Activated T-helper 1 cell treated with anti-CD3 and anti-CD28 coated beads, Interleukin-12 subunit alpha, Interleukin-12 subunit beta, Interleukin-2, Interleukin-4 antibody, amounts not matched to agents 30 ng/mL and 10 ng/mL and 1 ng/mL, durations not matched to agents 14 hours and 24 hours and 36 hours (primary cell): ENCODE measurements at regions of chr1 and their contacts with region 1.

Region 1: DNA sequence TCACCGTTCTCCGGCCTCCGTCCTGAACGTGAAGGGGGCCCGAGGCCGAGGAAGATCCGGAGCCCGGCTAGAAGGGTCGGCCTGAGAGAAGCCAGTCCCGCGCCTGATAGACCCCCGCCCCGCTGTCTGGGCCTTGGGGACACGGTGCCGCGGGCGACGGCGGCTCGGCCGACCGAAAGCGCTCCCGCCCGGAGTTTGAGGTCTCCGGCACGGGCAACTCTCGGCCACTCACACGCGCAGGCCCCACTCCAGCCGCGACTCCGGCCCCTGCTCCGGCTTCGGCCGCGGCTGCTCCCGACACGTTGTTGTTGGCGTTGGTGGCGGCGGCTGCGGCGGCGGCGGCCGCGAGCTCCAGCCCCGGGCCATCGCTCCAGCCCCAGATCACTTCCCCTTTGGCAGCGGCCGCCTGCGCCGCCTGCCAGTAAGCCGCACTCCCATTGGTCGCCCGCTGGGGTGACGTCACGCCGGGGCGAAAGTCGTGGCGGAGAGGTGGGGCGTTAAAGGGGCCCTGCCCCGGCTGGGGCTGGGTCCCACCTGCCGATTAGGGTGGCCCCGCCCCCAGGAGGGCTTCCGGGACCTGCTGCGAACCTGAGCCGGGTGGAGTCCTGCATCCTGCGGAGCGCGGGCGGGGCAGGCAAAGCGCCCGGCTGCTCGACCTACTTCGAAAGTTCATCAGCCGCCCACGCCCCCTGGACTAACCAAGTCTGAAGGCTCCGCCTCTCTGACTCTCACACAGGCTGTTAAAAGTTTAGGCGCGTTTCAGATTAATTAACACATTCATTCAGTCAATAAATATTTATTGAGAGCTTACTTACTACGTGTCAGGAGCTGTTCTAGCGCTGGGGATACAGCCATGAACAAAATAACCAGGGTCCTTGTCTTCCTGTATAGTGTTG is at the start of gene EFCAB14:
- DNase-seq: peak; percentile 99
- H3K4me3 Mint-ChIP-seq: peak within 1 kb of the TSS; percentile 97
- H3K27ac Mint-ChIP-seq: peak within 1 kb of the TSS; percentile 94
- H3K4me1 Mint-ChIP-seq: peaks cover 41% of the 10 kb centered on the region
- H3K27me3 Mint-ChIP-seq: no peaks in the 10 kb centered on the region
- total RNA-seq, gene EFCAB14: 67.0 and 70.4 TPM in 2 replicates

Region 2: GRCh38 chr1:46303038-46303871 is 415.7 kb before region 1 on chr1 and contains the starts of genes LRRC41 and UQCRH:
- intact Hi-C with region 1: loop called (anchors 2 kb)
- DNase-seq: peak; percentile 92
- H3K4me3 Mint-ChIP-seq: peak within 1 kb of the TSS; percentile 100
- H3K27ac Mint-ChIP-seq: peak within 1 kb of the TSS; percentile 99
- H3K4me1 Mint-ChIP-seq: peaks cover 35% of the 10 kb centered on the region
- H3K27me3 Mint-ChIP-seq: no peaks in the 10 kb centered on the region
- total RNA-seq, gene LRRC41: 62.1 and 62.6 TPM in 2 replicates
- total RNA-seq, gene UQCRH: 258 and 268 TPM in 2 replicates

Region 3: DNA sequence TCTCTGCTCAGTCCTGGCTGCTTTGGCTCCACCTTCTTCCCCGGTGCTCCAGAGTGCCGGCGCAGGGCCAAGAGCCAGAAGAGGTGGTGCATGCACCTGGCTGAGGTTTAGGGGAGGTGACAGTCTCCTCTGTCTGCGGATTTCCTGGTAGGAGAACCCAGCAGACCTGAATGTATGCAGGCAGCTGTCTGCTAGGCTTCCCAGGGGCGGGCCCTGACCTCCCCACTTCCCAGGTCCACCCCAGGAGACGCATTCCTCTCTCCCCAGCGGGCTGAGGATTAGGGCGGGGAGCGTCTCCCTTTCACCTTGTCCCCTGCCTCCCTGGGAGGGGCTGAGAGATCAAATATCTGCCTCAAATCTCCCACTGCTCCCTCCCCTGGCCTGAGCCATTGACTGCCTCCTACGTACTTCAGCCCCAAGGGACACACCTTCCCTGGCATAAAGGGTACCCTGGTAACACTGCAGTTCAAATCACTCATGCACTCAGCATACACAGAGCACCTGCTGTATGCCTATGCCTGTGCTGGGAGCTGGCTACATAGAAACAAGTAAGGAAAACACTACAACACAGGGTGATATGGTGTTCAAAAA is 201.9 kb before region 1 on chr1:
- intact Hi-C with region 1: no loop called
- DNase-seq: no peak
- H3K4me3 Mint-ChIP-seq: no peak overlapping the region
- H3K27ac Mint-ChIP-seq: no peak overlapping the region
- H3K4me1 Mint-ChIP-seq: peaks cover 16% of the 10 kb centered on the region
- H3K27me3 Mint-ChIP-seq: peaks cover 34% of the 10 kb centered on the region

Region 4: DNA sequence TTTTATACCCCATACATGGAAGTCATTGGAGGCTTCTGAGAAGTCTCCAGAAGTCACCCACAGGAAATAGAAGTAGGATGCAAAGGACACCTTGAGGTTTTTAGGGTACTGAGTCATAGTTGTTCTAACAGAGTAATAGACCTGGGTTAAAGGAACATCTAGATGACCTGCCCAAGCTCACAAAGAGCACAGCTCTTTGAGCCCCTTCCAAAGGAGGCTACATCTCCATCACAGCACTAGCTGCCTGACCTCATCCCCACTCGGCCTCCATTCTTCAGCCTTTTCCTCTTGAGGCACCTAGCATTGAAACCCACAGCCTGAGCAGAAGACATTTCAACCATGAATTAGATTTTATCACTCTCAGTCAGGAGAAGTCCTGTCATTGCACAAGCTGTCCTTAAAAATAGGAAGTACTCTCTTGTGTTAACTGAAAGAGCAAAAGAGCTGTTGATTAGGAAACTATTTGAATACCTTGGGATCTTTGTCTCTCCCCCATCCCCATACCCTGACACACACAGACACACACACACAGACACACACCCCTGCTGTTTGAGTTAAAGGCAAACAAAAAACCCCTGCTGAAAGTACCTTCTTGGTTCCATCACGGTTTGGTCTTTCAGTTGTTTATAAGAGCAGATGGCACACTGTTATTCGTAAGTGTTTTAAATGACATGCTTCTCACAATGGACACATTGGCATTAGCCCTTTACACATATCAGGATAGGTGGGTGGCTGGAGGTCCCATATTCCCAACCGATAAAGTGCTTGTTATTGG is 137.1 kb before region 1 on chr1:
- intact Hi-C with region 1: loop called (anchors 1 kb)
- DNase-seq: peak; percentile 45
- H3K4me3 Mint-ChIP-seq: peak overlapping the region; percentile 70
- H3K27ac Mint-ChIP-seq: peak overlapping the region; percentile 96
- H3K4me1 Mint-ChIP-seq: peaks cover 58% of the 10 kb centered on the region
- H3K27me3 Mint-ChIP-seq: no peaks in the 10 kb centered on the region

Region 5: DNA sequence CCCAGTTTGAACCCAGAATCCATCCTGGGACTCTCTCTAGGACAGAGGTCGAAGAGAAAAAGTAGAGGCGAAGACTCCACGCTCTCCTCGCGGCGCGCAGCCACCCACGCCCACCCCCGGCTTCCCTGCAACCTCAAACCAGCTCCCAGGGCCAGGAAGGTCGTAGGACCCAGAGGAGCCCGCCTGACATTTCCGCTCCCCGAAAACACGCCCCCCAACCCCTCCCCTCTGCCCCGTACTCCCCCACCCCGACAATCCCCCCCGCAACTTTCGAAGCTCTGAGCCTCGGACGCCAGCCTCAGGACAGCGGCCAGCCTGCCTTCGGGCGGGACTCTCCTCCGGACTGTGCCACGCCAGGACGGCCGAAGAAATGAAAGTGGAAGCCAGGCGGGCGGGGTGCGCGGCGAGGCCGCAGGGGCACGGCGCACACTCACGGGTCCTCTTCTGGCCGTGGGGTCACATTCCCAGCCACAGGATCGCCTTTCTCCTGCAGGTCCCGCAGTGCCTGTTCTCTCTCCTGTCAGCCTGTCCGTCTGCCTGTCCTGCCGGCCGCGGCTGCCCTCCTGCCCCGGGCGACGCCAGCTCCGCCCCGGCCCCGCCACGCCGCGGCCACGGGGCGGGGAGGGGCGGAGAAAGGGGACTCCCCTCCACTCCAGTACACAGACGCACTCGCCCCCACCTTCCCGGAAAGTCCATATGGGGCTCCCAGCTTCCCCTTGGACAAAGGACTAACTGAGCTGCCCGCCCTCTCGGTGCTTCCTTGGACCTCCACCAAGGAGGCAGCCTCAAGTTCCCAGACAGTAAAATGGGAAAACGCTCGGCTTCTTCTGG is 102.5 kb before region 1 on chr1 and contains the start of gene MOB3C:
- intact Hi-C with region 1: loop called (anchors 1 kb)
- DNase-seq: peak; percentile 51
- H3K4me3 Mint-ChIP-seq: peak within 1 kb of the TSS; percentile 90
- H3K27ac Mint-ChIP-seq: peak within 1 kb of the TSS; percentile 87
- H3K4me1 Mint-ChIP-seq: peaks cover 51% of the 10 kb centered on the region
- H3K27me3 Mint-ChIP-seq: peaks cover 2% of the 10 kb centered on the region
- total RNA-seq, gene MOB3C: 16.9 and 17.0 TPM in 2 replicates

Region 6: DNA sequence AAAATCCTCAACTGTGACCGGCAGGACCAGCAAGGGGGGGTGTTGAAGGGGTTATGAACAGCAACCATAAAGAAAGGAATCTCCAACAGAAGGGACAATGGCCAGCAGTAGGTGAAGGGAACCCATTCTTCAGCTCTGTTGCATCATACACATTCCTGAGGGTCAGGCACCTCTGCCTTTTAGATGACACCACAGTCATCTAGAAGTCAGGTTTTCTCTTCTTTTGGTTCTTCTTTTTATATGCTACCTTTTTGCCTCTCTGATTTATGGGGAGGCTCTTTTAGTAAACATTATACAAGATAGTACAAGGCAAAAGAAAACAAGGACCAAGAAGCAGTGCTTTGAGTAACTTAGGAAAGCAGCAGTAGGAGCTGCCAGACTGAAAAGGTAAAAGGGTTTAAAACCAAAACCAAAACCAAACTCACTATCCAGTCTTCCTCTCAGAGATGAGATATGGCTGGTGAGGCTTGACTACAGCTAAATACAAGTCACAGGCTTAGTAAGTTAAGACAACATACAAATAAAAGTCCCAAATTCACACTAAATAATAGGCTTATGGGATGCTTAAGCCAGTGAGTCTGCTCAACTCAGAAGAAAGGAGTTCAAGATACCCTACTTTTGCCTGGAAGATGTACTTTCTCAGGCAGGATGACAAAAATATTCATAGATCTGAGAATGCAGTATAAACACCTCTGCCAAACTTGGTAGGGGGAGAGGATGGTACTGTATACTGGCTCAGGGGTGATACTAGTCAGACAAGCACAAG is 43.2 kb before region 1 on chr1:
- intact Hi-C with region 1: loop called (anchors 2 kb)
- DNase-seq: no peak
- H3K4me3 Mint-ChIP-seq: peak overlapping the region; percentile 62
- H3K27ac Mint-ChIP-seq: peak overlapping the region; percentile 92
- H3K4me1 Mint-ChIP-seq: peaks cover 40% of the 10 kb centered on the region
- H3K27me3 Mint-ChIP-seq: no peaks in the 10 kb centered on the region

Region 7: GRCh38 chr1:46948629-46949274 is 229.8 kb after region 1 on chr1:
- intact Hi-C with region 1: no loop called
- DNase-seq: no peak
- H3K4me3 Mint-ChIP-seq: no peak overlapping the region
- H3K27ac Mint-ChIP-seq: no peak overlapping the region
- H3K4me1 Mint-ChIP-seq: peaks cover 18% of the 10 kb centered on the region
- H3K27me3 Mint-ChIP-seq: peaks cover 11% of the 10 kb centered on the region